ENCODE measurements at regions of chr2 and their contacts with region 1.

Region 1: GRCh38 chr2:25400576-25401216 is 59.0 kb upstream of the DNMT3A start:
- DNase-seq: no peak
- ATAC-seq: no peak
- H3K4me3 ChIP-seq: no peak overlapping the region
- H3K4me3 Mint-ChIP-seq: no peak overlapping the region
- H3K27ac ChIP-seq: no peak overlapping the region
- H3K27ac Mint-ChIP-seq: no peak overlapping the region
- H3K4me1 ChIP-seq: peaks cover 3 to 10% of the 10 kb centered on the region in 2 experiments
- H3K4me1 Mint-ChIP-seq: peaks cover 15 to 23% (median 18%) of the 10 kb centered on the region in 3 donors
- H3K27me3 ChIP-seq: no peaks in the 10 kb centered on the region
- H3K27me3 Mint-ChIP-seq: no peaks in the 10 kb centered on the region

Region 2: DNA sequence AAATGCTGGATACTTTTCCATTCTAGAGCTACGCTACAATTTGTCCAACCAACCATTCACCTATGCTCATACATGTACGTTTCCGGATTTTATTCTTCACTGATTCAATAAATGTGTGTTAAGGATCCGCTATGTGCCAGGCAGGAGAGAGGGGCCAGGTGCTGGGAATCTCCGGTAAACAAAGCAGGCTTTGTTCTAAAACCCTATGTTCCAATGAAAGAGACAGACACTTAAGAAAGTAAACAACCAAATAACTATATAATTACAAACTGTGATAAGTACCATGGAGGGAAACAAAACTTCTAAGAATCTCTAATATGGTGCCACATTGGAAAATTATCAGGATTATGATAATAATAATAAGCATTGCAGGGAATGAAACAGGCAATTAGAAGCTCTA is 210.2 kb before region 1 on chr2:
- CTCF ChIA-PET with region 1: interaction called in 1 of 2 experiments, 11 read pairs
- POLR2A ChIA-PET with region 1: no interaction called
- DNase-seq: no peak
- ATAC-seq: no peak
- H3K4me3 ChIP-seq: no peak overlapping the region
- H3K4me3 Mint-ChIP-seq: no peak overlapping the region
- H3K27ac ChIP-seq: no peak overlapping the region
- H3K27ac Mint-ChIP-seq: no peak overlapping the region
- H3K4me1 ChIP-seq: no peaks in the 10 kb centered on the region
- H3K4me1 Mint-ChIP-seq: no peaks in the 10 kb centered on the region
- H3K27me3 ChIP-seq: no peaks in the 10 kb centered on the region
- H3K27me3 Mint-ChIP-seq: peaks cover 0 to 2% of the 10 kb centered on the region in 2 donors

Region 3: DNA sequence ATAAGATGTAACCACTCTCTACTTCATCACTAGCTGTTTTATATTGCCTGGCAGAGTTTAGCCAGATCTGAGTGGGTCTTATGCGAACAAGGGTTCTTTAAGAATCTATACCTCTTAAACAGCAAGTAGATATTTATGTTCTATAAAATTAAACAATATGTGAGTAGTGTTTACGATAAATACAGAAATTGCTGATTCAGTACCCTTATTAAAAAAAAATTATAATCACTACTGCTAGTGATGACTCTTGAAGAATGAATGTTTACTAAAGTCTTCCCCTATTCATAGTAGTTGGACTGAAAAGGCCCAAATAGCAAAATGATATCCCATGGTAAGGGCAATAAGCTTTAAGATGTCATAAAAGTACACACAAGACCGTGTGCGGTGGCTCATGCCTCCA is 371.4 kb after region 1 on chr2:
- CTCF ChIA-PET with region 1: interaction called in 1 of 2 experiments, 12 read pairs
- POLR2A ChIA-PET with region 1: no interaction called
- DNase-seq: no peak
- ATAC-seq: no peak
- H3K4me3 ChIP-seq: no peak overlapping the region
- H3K4me3 Mint-ChIP-seq: no peak overlapping the region
- H3K27ac ChIP-seq: no peak overlapping the region
- H3K27ac Mint-ChIP-seq: no peak overlapping the region
- H3K4me1 ChIP-seq: peaks cover 0 to 2% of the 10 kb centered on the region in 2 experiments
- H3K4me1 Mint-ChIP-seq: peaks cover 3 to 18% (median 16%) of the 10 kb centered on the region in 3 donors
- H3K27me3 ChIP-seq: no peaks in the 10 kb centered on the region
- H3K27me3 Mint-ChIP-seq: no peaks in the 10 kb centered on the region